Right cardiac atrium (tissue), 5 donors: ENCODE measurements at regions of chr7 and their contacts with region 1.

Region 1: DNA sequence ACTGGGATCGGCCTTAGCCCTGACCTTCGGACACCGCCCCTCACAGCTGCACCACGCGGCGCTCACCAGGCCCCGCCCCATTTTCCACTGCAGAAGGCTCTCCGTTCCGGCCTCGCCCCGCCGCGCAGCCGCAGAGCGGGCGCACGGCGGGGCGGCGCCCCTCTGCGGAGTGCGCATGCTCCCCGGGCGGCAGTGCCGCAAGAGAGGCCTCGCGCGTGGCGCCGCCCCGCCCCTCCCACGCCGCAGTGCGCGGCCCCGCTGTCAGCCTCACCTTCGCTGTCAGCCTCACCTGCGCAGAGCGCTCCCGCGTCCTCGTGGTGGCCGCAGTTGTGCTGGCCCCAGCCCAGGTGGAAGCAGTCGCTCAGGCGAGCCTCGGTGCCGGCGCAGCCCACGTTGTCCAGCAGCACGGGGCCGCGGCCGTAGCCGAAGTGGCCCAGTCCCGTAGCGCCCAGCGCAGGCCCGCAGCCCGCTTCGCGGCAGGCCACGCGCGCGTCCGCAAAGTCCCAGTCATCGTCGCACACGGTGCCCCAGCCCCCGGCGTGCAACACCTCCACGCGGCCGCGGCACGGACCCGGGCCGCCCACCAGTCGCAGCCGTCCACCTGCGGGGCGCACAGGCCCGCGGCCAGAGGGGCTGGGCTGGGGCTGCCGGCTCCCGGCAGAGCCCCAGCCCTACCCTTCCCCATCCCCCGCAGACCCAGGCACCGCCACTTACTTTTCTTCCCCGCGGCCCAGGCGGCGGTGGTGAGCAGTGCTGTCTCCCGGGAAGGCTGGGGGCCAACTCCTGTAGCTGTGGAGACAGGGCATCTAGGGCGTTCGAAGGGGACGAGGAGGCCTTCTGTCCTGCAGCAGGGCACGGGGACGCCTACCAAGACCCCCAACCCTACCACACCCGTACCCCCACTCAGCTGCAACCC is 16.1 kb downstream of the SSC4D start:
- DNase-seq: peak; percentile 97 to 98 (median 98)
- ATAC-seq: peak; percentile 92 to 94
- H3K4me3 ChIP-seq: peak overlapping the region; percentile 33
- H3K27ac ChIP-seq: peak overlapping the region; percentile 89
- H3K4me1 ChIP-seq: peaks cover 3% of the 10 kb centered on the region
- H3K27me3 ChIP-seq: no peaks in the 10 kb centered on the region

Region 2: GRCh38 chr7:76327610-76328009 is 65.8 kb before region 1 on chr7:
- intact Hi-C with region 1: no loop called
- DNase-seq: no peak
- ATAC-seq: no peak
- H3K4me3 ChIP-seq: no peak overlapping the region
- H3K27ac ChIP-seq: peak overlapping the region; percentile 61
- H3K4me1 ChIP-seq: peaks cover 11% of the 10 kb centered on the region
- H3K27me3 ChIP-seq: no peaks in the 10 kb centered on the region

Region 3: DNA sequence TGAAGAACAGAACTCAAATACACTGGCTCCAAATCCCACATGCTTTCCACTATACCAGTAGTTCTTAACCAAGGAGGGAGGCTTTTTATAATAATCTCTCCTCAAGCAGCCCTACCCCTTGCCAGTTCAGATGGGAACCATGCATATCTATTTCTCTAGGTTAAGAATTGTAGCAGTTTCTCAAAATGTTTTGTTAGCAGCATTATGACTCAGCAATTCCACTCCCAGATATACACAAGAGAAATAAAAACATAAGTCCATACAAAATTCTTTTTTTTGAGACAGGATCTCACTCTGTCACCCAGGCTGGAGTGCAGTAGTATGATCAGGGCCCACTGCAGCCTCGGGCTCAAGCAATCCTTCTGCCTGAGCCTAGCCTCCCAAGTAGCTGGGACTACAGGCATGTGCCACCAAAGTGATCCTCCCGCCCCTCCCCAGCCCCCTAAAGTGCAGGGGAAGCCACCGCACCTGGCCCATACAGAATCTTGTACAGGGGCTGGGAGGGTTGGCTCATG is 52.7 kb before region 1 on chr7:
- intact Hi-C with region 1: loop called in 1 of 4 experiments (anchors 10 kb)
- DNase-seq: no peak
- ATAC-seq: peak; percentile 21 to 45
- H3K4me3 ChIP-seq: no peak overlapping the region
- H3K27ac ChIP-seq: no peak overlapping the region
- H3K4me1 ChIP-seq: peaks cover 22% of the 10 kb centered on the region
- H3K27me3 ChIP-seq: no peaks in the 10 kb centered on the region